ENCODE measurements at regions of chr19 and their contacts with region 1.

Region 1: GRCh38 chr19:29837448-29837981 is 25.7 kb downstream of the CCNE1 start:
- DNase-seq: peak; percentile 64
- H3K4me3 Mint-ChIP-seq: peak overlapping the region; percentile 77
- H3K27ac Mint-ChIP-seq: peak overlapping the region; percentile 99
- H3K4me1 Mint-ChIP-seq: peaks cover 68% of the 10 kb centered on the region
- H3K27me3 Mint-ChIP-seq: no peaks in the 10 kb centered on the region

Region 2: DNA sequence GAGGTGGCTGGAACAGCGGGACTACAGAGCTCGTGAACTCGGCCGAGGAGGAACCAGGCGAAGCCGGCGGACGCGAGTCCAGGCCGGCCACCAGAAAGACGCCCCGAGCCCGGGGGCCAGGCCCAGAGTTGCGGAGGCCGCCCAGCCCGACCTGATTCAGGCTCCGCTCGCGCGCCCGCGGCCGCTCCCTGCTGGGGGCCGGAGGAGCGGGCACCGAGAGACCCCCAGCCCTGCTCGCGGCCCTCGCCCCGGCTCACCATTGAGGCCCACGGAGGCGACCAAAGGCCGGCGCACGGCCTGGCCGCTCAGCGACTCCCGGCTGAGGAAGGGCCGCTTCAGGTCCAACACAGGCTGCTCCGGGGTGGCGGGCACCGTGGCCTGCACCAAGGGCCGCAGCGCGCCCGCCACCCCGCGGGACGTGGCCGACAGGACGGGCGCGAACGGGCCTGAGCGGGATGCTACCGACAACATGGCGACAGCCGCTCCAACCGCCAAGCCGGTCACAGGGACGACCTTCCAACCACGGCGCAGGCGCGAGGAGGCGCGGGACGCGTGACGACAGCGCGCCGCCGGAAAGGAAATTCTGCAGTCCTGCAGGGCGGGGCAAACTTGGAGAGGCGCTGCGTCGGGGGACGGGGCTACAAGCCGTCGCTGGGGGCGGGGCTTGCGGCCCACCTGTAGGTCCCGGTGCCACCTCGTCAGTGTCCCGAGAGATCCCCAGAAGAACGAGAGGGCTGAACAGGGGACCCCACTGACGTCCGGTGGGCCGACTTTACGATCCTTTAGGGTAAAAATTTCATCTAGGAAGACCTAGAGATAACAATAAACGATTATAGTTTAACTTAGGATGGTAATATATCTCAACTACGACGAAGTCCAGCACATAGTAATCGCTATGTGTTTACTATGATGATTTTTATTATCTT is 624.6 kb before region 1 on chr19 and contains the start of gene UQCRFS1:
- intact Hi-C with region 1: loop called (anchors 10 kb)
- DNase-seq: peak; percentile 97
- H3K4me3 Mint-ChIP-seq: peak within 1 kb of the TSS; percentile 95
- H3K27ac Mint-ChIP-seq: peak within 1 kb of the TSS; percentile 93
- H3K4me1 Mint-ChIP-seq: peaks cover 39% of the 10 kb centered on the region
- H3K27me3 Mint-ChIP-seq: peaks cover 2% of the 10 kb centered on the region
- total RNA-seq, gene UQCRFS1: 40.3 and 43.6 TPM in 2 replicates

Region 3: GRCh38 chr19:29811125-29812079 is 26.1 kb before region 1 on chr19 and contains the start of gene CCNE1:
- intact Hi-C with region 1: loop called (anchors 1 kb)
- DNase-seq: peak; percentile 92
- H3K4me3 Mint-ChIP-seq: peak within 1 kb of the TSS; percentile 97
- H3K27ac Mint-ChIP-seq: peak within 1 kb of the TSS; percentile 92
- H3K4me1 Mint-ChIP-seq: peaks cover 38% of the 10 kb centered on the region
- H3K27me3 Mint-ChIP-seq: no peaks in the 10 kb centered on the region
- total RNA-seq, gene CCNE1: 55.1 and 58.4 TPM in 2 replicates

Region 4: DNA sequence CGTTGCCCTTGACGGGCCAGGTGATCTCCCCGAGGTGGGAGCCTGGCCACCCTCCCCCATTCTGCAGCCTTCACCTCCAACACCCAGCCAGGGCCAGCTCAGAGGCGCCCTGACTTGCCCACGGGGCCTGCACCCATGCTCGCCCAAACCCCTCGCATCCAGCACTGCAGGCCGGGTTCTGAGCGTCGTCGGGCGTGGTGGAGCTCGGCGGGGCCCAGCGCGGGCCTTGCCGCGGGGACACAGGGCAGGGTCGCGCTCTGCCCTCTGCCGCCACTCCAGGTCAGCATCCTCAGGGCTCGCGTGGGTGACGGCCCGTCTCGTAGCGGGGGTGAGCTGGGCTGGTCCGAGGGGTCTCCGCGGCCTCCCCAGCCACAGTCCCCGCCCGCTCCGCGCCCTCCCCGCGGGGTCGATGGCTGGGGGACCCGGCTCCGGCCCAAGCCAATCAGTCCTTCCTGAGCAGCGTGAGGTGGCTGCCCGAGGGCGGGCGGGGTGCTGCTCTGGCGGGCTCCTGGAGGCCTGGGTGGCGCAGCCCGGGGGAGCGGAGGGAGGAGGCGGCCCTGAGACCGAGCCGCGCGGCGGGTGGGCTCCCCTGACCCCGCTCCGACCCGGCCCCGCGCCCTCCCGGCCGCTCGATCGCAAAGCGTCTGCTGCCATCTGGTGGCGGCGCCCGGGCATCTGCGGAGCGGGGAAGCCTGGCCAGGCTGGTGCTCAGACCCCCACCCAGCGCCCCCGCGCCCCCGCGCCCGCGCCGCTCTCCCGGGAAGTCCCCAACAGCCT is 35.7 kb after region 1 on chr19:
- intact Hi-C with region 1: loop called (anchors 2 kb)
- DNase-seq: peak; percentile 61
- H3K4me3 Mint-ChIP-seq: peak overlapping the region; percentile 61
- H3K27ac Mint-ChIP-seq: no peak overlapping the region
- H3K4me1 Mint-ChIP-seq: peaks cover 11% of the 10 kb centered on the region
- H3K27me3 Mint-ChIP-seq: peaks cover 8% of the 10 kb centered on the region

Region 5: DNA sequence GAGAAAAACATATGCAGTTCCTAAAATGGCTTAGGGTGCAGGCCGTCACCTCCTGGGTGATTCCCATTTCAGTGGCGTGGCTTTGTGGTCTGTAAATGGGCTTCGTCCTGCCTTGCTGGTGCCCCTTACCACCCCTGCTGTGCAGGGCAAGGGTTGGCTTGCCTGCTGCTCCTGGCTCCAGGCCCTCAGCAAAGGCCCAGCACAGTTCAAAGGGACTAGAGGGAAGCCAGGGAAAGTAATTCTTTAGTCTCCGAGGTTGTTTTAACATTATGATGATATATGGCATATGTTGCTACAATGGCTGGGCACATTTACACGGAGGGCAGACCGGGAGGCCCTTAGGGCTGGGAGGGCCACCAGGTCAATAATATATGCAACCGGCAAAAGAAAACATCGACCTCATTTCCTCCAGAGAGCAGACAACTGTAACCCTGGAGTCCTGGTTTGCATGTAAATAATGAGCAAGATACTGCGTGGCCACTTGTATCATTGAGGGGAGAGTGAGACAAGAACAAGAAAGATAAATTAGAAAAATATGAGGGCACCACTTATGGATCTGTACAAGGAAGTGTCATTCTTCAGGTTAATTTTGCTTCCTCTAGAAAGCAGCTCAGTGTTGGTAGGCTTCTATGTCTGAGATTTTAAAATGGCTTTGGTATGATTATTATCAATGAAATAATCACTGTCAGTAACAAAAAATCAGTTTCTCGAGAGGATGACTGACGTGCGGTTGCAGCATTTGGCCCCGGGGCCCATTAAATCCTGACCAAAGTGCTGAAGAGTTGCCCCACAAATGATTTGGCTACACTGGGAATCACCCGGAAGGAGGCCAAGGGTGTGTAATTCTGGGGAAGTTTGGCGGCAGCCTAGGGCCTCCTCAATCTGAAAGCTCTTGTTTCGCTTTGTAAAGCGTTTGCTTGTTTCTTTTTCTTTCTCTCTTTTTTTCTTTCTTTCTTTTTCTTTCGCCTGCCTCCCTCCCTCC is 71.7 kb after region 1 on chr19:
- intact Hi-C with region 1: no loop called
- DNase-seq: no peak
- H3K4me3 Mint-ChIP-seq: no peak overlapping the region
- H3K27ac Mint-ChIP-seq: no peak overlapping the region
- H3K4me1 Mint-ChIP-seq: no peaks in the 10 kb centered on the region
- H3K27me3 Mint-ChIP-seq: peaks cover 4% of the 10 kb centered on the region

Region 6: GRCh38 chr19:31349160-31349881 is 1511.8 kb after region 1 on chr19 and contains the start of gene TSHZ3:
- intact Hi-C with region 1: loop called (anchors 10 kb)
- DNase-seq: peak; percentile 40
- H3K4me3 Mint-ChIP-seq: peak within 1 kb of the TSS; percentile 89
- H3K27ac Mint-ChIP-seq: peak within 1 kb of the TSS; percentile 67
- H3K4me1 Mint-ChIP-seq: peaks cover 28% of the 10 kb centered on the region
- H3K27me3 Mint-ChIP-seq: peaks cover 54% of the 10 kb centered on the region
- total RNA-seq, gene TSHZ3: 1.5 and 2.0 TPM in 2 replicates

Measured in activated T-helper 1 cell treated with anti-CD3 and anti-CD28 coated beads, Interleukin-12 subunit alpha, Interleukin-12 subunit beta, Interleukin-2, Interleukin-4 antibody, amounts not matched to agents 30 ng/mL and 10 ng/mL and 1 ng/mL, durations not matched to agents 14 hours and 24 hours and 36 hours (primary cell).